ENCODE measurements at regions of chr1 and their contacts with region 1.

Region 1: GRCh38 chr1:42822800-42823392 is 5.7 kb upstream of the SVBP start:
- DNase-seq: no peak
- H3K4me3 ChIP-seq: no peak overlapping the region
- H3K27ac ChIP-seq: no peak overlapping the region
- H3K4me1 ChIP-seq: peaks cover 8% of the 10 kb centered on the region
- CTCF ChIP-seq: no peak

Region 2: DNA sequence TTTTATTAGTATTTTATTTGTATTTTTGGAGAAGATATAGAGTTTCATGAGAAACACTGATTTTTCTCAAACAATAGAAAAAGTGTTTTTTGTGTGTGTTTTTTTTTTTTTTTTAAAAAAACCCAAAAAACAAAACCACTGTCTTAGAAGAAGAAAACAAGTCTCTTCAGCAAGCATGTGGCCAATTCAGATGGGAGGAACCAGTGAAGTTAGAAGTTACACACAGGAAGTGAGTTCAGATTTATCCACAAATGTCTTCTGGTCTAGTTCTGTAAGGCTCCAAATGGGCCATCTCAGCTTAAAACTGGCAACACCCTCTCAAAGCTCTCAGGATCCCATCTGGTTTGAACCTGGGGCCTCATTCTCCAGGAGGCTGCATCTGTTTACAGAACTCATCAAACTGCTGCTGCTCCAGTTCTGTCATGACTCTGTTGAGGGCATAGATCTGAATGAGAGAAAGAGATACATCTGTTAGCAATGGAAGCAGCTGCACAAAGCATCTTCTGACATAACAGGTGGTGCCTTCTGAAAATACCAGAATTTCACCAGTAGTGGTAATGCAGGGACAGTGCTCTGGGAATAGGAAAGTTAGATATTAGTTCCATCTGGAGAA is 15.7 kb before region 1 on chr1:
- CTCF ChIA-PET with region 1: no interaction called
- POLR2A ChIA-PET with region 1: interaction called, 18 read pairs
- intact Hi-C with region 1: no loop called
- DNase-seq: no peak
- H3K4me3 ChIP-seq: no peak overlapping the region
- H3K27ac ChIP-seq: no peak overlapping the region
- H3K4me1 ChIP-seq: no peaks in the 10 kb centered on the region
- CTCF ChIP-seq: no peak

Region 3: GRCh38 chr1:42846257-42847110 is 23.6 kb after region 1 on chr1 and contains the start of gene ZNF691:
- CTCF ChIA-PET with region 1: no interaction called
- POLR2A ChIA-PET with region 1: interaction called, 22 read pairs
- intact Hi-C with region 1: no loop called
- DNase-seq: peak; percentile 97
- H3K4me3 ChIP-seq: peak within 1 kb of the TSS; percentile 89
- H3K27ac ChIP-seq: peak within 1 kb of the TSS; percentile 73
- H3K4me1 ChIP-seq: peaks cover 48% of the 10 kb centered on the region
- CTCF ChIP-seq: peak; percentile 59
- total RNA-seq, gene ZNF691: 14.1 and 17.8 TPM in 2 replicates

Region 4: DNA sequence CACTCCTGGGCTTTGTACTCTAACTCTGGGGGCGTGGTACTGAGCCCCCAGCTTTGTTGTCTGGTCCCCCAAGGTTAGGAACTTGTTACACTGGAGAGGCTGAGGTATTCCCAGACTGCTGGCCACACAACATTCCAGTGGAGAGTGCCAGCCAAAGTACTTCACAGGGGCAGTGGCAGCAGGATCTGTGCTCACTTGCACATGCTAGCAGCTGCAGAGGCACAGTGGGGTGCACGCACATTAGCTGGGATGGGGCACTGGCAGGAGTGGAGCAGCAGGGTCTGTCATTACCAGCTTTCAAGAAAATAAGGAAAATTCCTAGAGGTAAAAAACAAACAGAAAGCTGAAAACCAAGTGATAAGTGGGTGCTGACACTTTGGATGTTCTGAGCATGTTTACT is 54.5 kb after region 1 on chr1:
- CTCF ChIA-PET with region 1: no interaction called
- POLR2A ChIA-PET with region 1: no interaction called
- intact Hi-C with region 1: no loop called
- DNase-seq: no peak
- H3K4me3 ChIP-seq: no peak overlapping the region
- H3K27ac ChIP-seq: no peak overlapping the region
- H3K4me1 ChIP-seq: no peaks in the 10 kb centered on the region
- CTCF ChIP-seq: no peak

Region 5: DNA sequence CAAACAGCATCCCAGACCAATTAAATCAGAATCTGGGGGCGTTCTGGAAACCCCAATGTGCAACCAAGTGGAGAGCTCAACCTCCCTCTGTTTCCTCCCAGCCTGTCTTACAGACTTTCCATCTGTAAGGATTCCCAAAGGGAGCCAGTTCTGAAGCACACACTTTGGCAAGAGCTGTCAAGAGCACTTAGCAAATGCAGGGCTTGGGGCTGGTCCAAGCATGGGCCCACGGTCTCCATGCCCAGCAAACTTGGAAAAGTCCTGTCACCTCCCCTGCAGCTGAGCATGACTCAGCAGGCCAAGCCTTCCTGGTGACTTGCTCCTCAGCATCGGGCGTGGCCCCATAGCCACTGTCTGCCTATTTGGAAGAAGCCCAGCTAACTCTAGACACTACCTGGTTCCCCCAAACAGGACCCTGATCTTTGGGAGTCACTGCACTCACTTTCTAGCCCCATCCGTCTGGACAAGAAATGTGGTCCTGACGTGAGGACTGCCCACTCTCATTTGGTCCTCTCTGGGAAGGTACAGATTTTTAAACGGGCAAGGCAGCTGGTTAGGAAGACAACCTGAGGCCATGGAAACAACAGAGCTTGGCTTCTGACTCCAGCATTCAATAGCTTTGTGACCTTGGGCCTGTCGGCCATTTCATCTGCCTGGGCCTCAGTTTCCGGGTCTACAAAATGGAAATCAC is 118.9 kb after region 1 on chr1:
- CTCF ChIA-PET with region 1: no interaction called
- POLR2A ChIA-PET with region 1: no interaction called
- intact Hi-C with region 1: no loop called
- DNase-seq: no peak
- H3K4me3 ChIP-seq: peak overlapping the region; percentile 15
- H3K27ac ChIP-seq: peak overlapping the region; percentile 93
- H3K4me1 ChIP-seq: peaks cover 84% of the 10 kb centered on the region
- CTCF ChIP-seq: no peak

Region 6: GRCh38 chr1:42957577-42958487 is 134.9 kb after region 1 on chr1:
- CTCF ChIA-PET with region 1: no interaction called
- POLR2A ChIA-PET with region 1: no interaction called
- intact Hi-C with region 1: no loop called
- DNase-seq: peak; percentile 80
- H3K4me3 ChIP-seq: peak overlapping the region; percentile 91
- H3K27ac ChIP-seq: peak overlapping the region; percentile 66
- H3K4me1 ChIP-seq: peaks cover 72% of the 10 kb centered on the region
- CTCF ChIP-seq: 0 out of 2 replicates have a peak, but pooled peaks have one; percentile 6